Adrenal gland (tissue), 19 donors: ENCODE measurements at regions of chr17 and their contacts with region 1.

Region 1: GRCh38 chr17:46182961-46183360 is 10.3 kb downstream of the KANSL1 start:
- DNase-seq: no peak
- H3K4me3 ChIP-seq: no peak overlapping the region
- H3K27ac ChIP-seq: no peak overlapping the region
- H3K4me1 ChIP-seq: peaks cover 20 to 79% of the 10 kb centered on the region in 2 donors
- H3K27me3 ChIP-seq: no peaks in the 10 kb centered on the region
- CTCF ChIP-seq: no peak
- POLR2A ChIP-seq: no peak

Region 2: DNA sequence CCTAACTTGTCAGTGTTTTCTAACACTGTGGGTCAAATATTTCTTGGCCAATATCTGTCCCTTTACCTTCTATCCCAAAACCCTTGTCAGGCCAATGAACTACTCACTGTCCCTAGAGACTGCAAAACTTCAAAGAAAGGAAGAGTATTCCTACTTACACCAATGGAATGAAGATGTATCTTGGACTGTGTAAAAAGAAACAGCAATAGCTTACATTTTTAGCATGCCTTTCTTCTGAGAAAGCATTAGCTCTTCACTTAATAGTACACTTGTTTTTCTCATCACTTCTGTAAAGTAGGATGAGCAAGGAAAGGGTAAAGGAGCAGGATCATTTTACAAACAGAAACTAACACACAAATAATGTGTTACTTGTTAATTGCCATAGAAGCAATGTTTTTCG is 110.0 kb before region 1 on chr17:
- intact Hi-C with region 1: loop called in 1 of 2 experiments (anchors 10 kb)
- DNase-seq: no peak
- H3K4me3 ChIP-seq: no peak overlapping the region
- H3K27ac ChIP-seq: no peak overlapping the region
- H3K4me1 ChIP-seq: peaks cover 0 to 13% of the 10 kb centered on the region in 2 donors
- H3K27me3 ChIP-seq: no peaks in the 10 kb centered on the region
- CTCF ChIP-seq: no peak
- POLR2A ChIP-seq: no peak

Region 3: GRCh38 chr17:46139432-46140210 is 43.3 kb before region 1 on chr17:
- intact Hi-C with region 1: no loop called
- DNase-seq: no peak
- H3K4me3 ChIP-seq: no peak overlapping the region
- H3K27ac ChIP-seq: peak overlapping the region in 2 of 5 donors; percentile 11 to 47
- H3K4me1 ChIP-seq: peaks cover 35 to 81% of the 10 kb centered on the region in 2 donors
- H3K27me3 ChIP-seq: no peaks in the 10 kb centered on the region
- CTCF ChIP-seq: no peak
- POLR2A ChIP-seq: no peak